Gastrocnemius medialis (tissue), 4 donors: ENCODE measurements at regions of chr20 and their contacts with region 1.

Region 1: DNA sequence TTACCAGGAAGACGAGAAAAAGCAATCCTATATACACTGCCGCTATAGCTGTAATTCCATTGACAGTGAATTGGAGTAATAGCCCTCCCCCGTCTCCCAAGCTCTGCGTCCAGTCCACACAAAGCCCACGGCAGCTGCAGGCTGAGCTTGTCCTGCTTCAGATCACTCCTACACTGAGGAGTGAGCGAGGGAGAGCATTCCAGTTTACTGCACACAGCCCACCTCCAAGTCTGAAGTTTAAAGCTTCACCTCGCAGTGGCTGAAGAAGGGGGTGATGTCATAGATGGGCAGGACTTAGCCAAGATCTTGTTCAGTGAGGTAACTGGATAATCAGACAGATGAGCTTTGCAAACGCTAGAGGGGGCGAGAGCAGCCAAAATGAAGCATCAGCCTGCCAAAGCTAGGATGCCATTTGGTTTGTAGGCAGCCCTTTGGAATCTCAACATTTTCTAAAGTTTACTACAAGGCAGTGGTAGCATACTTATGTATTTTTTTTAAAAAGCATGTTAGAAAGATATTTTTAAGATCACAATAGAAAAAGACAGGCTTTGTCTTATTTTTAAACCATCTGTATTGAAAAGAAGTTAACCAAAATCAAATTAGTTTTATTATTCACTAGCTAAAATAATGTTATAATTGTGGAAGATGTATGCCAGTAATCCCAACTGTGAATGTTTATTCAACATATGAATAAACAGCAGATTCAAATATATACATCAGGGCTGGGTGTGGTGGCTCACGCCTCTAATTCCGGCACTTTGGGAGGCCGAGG is at the start of gene FLRT3:
- DNase-seq: peak; percentile 53 to 68
- ATAC-seq: peak; percentile 91 to 92
- H3K4me3 ChIP-seq: peak within 1 kb of the TSS; percentile 51 to 63 (median 60)
- H3K27ac ChIP-seq: peak within 1 kb of the TSS; percentile 34 to 77 (median 68)
- H3K4me1 ChIP-seq: peaks cover 25 to 27% of the 10 kb centered on the region in 2 donors
- H3K27me3 ChIP-seq: no peaks in the 10 kb centered on the region
- CTCF ChIP-seq: peak; percentile 14 to 61 (median 58)
- POLR2A ChIP-seq: peak; percentile 34 to 75
- total RNA-seq, gene FLRT3: 0.58 to 3.0 (median 1.8) TPM

Region 2: GRCh38 chr20:14295238-14295637 is 42.3 kb before region 1 on chr20:
- in situ Hi-C with region 1: no loop called
- intact Hi-C with region 1: no loop called
- DNase-seq: no peak
- ATAC-seq: no peak
- H3K4me3 ChIP-seq: no peak overlapping the region
- H3K27ac ChIP-seq: no peak overlapping the region
- H3K4me1 ChIP-seq: peaks cover 0 to 4% of the 10 kb centered on the region in 2 donors
- H3K27me3 ChIP-seq: no peaks in the 10 kb centered on the region
- CTCF ChIP-seq: no peak
- POLR2A ChIP-seq: no peak

Region 3: GRCh38 chr20:14582855-14583254 is 245.3 kb after region 1 on chr20:
- in situ Hi-C with region 1: no loop called
- intact Hi-C with region 1: no loop called
- DNase-seq: no peak
- ATAC-seq: peak; percentile 79 to 91
- H3K4me3 ChIP-seq: no peak overlapping the region
- H3K27ac ChIP-seq: no peak overlapping the region
- H3K4me1 ChIP-seq: no peaks in the 10 kb centered on the region
- H3K27me3 ChIP-seq: no peaks in the 10 kb centered on the region
- CTCF ChIP-seq: no peak
- POLR2A ChIP-seq: no peak

Region 4: DNA sequence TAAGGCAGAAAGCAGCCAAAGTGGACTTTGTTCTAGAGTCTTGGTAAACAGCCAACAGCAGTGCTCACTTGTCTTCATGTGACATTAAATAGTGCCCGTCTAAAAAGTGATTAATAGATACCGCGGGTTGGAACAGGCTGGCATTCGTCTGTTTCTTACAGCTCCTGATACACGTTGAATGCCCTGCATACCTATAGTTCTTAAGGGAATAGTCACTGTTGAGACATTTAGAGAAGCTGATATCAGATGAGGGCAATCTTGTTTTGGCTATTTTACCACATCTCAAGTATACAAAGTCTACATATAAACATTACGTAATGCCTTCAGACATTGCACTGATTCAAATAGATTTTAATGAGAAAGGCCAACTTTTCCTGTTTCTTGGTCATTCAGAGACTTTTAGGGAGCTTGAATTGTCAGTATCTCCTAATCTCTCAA is 374.7 kb after region 1 on chr20:
- in situ Hi-C with region 1: no loop called
- intact Hi-C with region 1: loop called (anchors 10 kb)
- DNase-seq: no peak
- ATAC-seq: peak in 1 of 2 donors; percentile 60
- H3K4me3 ChIP-seq: no peak overlapping the region
- H3K27ac ChIP-seq: no peak overlapping the region
- H3K4me1 ChIP-seq: peaks cover 5 to 9% of the 10 kb centered on the region in 2 donors
- H3K27me3 ChIP-seq: no peaks in the 10 kb centered on the region
- CTCF ChIP-seq: no peak
- POLR2A ChIP-seq: no peak

Region 5: GRCh38 chr20:14775518-14776203 is 438.1 kb after region 1 on chr20:
- in situ Hi-C with region 1: no loop called
- intact Hi-C with region 1: loop called (anchors 5 kb)
- DNase-seq: peak; percentile 65 to 74
- ATAC-seq: peak; percentile 91 to 99
- H3K4me3 ChIP-seq: no peak overlapping the region
- H3K27ac ChIP-seq: peak overlapping the region; percentile 7 to 77 (median 34)
- H3K4me1 ChIP-seq: peaks cover 24 to 42% of the 10 kb centered on the region in 2 donors
- H3K27me3 ChIP-seq: no peaks in the 10 kb centered on the region
- CTCF ChIP-seq: no peak
- POLR2A ChIP-seq: no peak

Region 6: DNA sequence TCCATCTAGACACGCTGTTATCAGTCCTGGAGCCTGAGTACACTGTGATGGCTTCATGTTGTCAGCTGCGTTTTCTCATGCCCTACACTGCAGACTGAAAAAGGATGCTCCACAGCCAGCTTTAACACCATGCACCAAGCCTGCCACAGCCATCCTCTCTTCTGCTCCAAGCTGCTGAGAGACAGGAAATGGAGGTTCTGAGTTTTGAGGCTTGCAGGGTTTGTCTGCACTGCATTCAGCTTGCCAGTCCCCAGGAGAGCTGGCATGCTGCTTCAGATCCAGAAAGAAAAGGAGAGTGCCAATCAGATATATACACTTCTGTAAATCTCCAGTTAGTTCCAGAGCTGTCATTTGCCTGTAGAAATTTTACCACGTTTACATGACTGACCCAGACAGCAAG is 550.5 kb after region 1 on chr20:
- in situ Hi-C with region 1: no loop called
- intact Hi-C with region 1: no loop called
- DNase-seq: no peak
- ATAC-seq: no peak
- H3K4me3 ChIP-seq: no peak overlapping the region
- H3K27ac ChIP-seq: no peak overlapping the region
- H3K4me1 ChIP-seq: no peaks in the 10 kb centered on the region
- H3K27me3 ChIP-seq: no peaks in the 10 kb centered on the region
- CTCF ChIP-seq: no peak
- POLR2A ChIP-seq: no peak

Region 7: DNA sequence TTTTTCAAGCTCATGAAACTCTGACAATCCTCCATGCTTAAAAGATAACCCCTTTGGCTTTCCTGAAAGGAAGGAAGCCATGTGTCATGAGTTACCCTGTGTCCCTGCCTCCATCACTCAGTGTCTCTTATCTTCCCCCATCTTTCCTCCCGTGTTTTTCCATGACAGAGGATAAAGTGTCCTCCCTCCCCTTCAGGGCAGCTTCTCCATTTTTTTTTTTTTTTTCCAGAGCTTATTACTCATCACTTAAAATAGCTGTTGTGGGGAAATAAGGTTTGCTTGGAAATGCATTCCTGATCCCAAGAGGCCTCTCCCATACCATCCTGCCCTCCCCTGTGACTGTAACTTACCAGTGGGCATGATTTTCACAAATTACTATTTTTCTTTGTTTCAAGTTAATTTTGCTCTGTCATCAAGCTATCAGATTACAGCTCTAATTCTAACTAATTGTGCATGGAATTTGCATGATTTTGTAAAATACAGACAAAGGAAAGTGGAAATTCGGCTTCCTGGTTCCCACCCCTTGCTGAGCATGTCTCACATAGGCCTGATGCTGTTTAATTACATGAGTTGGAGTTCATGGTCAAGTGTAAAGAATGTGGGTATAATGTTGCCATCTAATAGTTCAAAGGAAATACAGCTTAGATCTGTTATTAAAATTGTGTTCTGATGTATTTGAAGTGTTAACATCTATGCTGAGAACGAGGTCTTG is 614.3 kb after region 1 on chr20:
- in situ Hi-C with region 1: no loop called
- intact Hi-C with region 1: loop called (anchors 2 kb)
- DNase-seq: no peak
- ATAC-seq: peak; percentile 91 to 94
- H3K4me3 ChIP-seq: no peak overlapping the region
- H3K27ac ChIP-seq: no peak overlapping the region
- H3K4me1 ChIP-seq: peaks cover 5 to 6% of the 10 kb centered on the region in 2 donors
- H3K27me3 ChIP-seq: no peaks in the 10 kb centered on the region
- CTCF ChIP-seq: no peak
- POLR2A ChIP-seq: no peak

Region 8: DNA sequence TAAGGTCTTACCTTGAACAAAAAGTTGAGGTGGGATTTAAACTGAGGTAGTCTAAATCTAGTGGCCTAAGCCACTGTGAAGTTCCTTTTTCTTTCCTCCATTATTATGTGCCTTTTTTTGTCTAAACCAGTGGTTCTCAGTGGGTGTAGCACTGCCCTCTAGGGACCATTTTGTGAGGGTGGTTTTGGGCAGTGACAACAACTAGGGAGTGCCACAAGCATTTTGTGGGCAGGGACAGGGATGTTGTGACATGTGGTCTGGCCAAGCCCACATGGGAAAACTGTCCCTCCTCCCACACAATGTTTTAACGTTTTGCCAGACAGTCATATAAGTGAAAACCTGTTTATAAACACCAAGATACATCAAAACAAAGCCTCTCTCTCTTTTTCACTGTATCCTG is 899.2 kb after region 1 on chr20:
- in situ Hi-C with region 1: no loop called
- intact Hi-C with region 1: loop called (anchors 10 kb)
- DNase-seq: no peak
- ATAC-seq: no peak
- H3K4me3 ChIP-seq: no peak overlapping the region
- H3K27ac ChIP-seq: no peak overlapping the region
- H3K4me1 ChIP-seq: no peaks in the 10 kb centered on the region
- H3K27me3 ChIP-seq: no peaks in the 10 kb centered on the region
- CTCF ChIP-seq: no peak
- POLR2A ChIP-seq: no peak